ENCODE measurements at regions of chr16 and their contacts with region 1.

Region 1: GRCh38 chr16:71883849-71884638 is at the start of gene ZNF821:
- DNase-seq: peak; percentile 72
- H3K4me3 ChIP-seq: peak within 1 kb of the TSS; percentile 45 to 97 (median 90)
- H3K27ac ChIP-seq: peak within 1 kb of the TSS; percentile 62
- H3K4me1 ChIP-seq: peaks cover 24% of the 10 kb centered on the region
- H3K27me3 ChIP-seq: no peaks in the 10 kb centered on the region
- CTCF ChIP-seq: peak; percentile 28 to 58
- POLR2A ChIP-seq: peak; percentile 56
- total RNA-seq, gene ZNF821: 7.3 and 9.6 TPM in 2 replicates

Region 2: GRCh38 chr16:71681360-71681980 is 202.6 kb before region 1 on chr16:
- CTCF ChIA-PET with region 1: no interaction called
- POLR2A ChIA-PET with region 1: no interaction called
- dilution Hi-C with region 1: no loop called
- intact Hi-C with region 1: no loop called
- DNase-seq: no peak
- H3K4me3 ChIP-seq: no peak overlapping the region
- H3K27ac ChIP-seq: no peak overlapping the region
- H3K4me1 ChIP-seq: no peaks in the 10 kb centered on the region
- H3K27me3 ChIP-seq: no peaks in the 10 kb centered on the region
- CTCF ChIP-seq: no peak
- POLR2A ChIP-seq: no peak

Region 3: GRCh38 chr16:71762186-71762585 is 121.9 kb before region 1 on chr16:
- CTCF ChIA-PET with region 1: interaction called, 5 read pairs
- POLR2A ChIA-PET with region 1: no interaction called
- dilution Hi-C with region 1: no loop called
- intact Hi-C with region 1: loop called (anchors 5 kb)
- DNase-seq: no peak
- H3K4me3 ChIP-seq: no peak overlapping the region
- H3K27ac ChIP-seq: peak overlapping the region; percentile 56
- H3K4me1 ChIP-seq: peaks cover 21% of the 10 kb centered on the region
- H3K27me3 ChIP-seq: no peaks in the 10 kb centered on the region
- CTCF ChIP-seq: no peak
- POLR2A ChIP-seq: no peak

Region 4: GRCh38 chr16:71853413-71853812 is 30.6 kb before region 1 on chr16:
- CTCF ChIA-PET with region 1: interaction called, 14 read pairs
- POLR2A ChIA-PET with region 1: no interaction called
- dilution Hi-C with region 1: no loop called
- intact Hi-C with region 1: no loop called
- DNase-seq: no peak
- H3K4me3 ChIP-seq: no peak overlapping the region
- H3K27ac ChIP-seq: no peak overlapping the region
- H3K4me1 ChIP-seq: no peaks in the 10 kb centered on the region
- H3K27me3 ChIP-seq: no peaks in the 10 kb centered on the region
- CTCF ChIP-seq: no peak
- POLR2A ChIP-seq: no peak

Region 5: DNA sequence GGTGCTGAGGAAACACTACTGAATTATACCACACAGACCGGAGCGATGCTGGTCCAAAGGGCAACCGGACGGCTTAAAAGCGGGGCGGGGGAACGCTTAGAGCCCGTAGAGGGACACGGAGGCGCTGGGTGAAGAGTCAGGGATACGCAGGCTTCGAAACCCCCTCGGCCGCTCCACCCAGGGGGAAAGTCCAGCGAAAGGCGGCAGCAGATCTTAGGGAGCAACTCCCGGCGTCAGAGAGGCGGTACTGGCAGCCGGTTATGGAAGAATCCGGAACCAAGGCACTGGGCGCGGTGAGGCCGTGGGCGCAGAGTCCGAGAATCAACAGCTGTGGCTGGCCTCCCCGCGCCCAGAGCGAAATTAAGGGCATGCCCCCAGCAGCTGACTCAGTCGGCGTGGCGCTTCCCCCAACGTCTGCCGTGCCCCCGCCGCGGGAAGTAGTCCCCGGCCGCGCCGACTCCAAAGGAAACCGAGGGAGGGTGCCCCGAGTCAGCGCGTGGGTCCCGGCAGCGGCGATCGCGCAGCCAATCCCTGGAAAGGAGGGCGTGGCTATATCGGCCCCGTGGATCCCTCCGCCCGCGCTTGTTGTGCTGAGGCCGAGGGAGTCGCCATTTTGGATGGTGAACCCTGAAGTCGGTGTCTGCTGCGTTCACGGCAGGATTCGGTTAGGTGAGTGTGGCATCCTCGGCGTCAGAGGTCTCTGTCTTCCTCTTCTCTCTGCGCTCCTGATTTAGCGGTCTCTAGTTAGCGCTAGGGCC is 11.1 kb after region 1 on chr16 and contains the start of gene IST1:
- CTCF ChIA-PET with region 1: interaction called, 44 read pairs
- POLR2A ChIA-PET with region 1: interaction called, 4 read pairs
- dilution Hi-C with region 1: no loop called
- intact Hi-C with region 1: loop called (anchors 1 kb)
- DNase-seq: peak; percentile 98
- H3K4me3 ChIP-seq: peak within 1 kb of the TSS; percentile 84 to 98 (median 95)
- H3K27ac ChIP-seq: peak within 1 kb of the TSS; percentile 88
- H3K4me1 ChIP-seq: peaks cover 8% of the 10 kb centered on the region
- H3K27me3 ChIP-seq: no peaks in the 10 kb centered on the region
- CTCF ChIP-seq: no peak
- POLR2A ChIP-seq: peak; percentile 95
- total RNA-seq, gene IST1: 165 and 185 TPM in 2 replicates

Region 6: GRCh38 chr16:71927383-71927782 is 43.3 kb after region 1 on chr16:
- CTCF ChIA-PET with region 1: interaction called, 27 read pairs
- POLR2A ChIA-PET with region 1: no interaction called
- dilution Hi-C with region 1: no loop called
- intact Hi-C with region 1: loop called (anchors 1 kb)
- DNase-seq: peak; percentile 90
- H3K4me3 ChIP-seq: no peak overlapping the region
- H3K27ac ChIP-seq: peak overlapping the region; percentile 75
- H3K4me1 ChIP-seq: peaks cover 55% of the 10 kb centered on the region
- H3K27me3 ChIP-seq: no peaks in the 10 kb centered on the region
- CTCF ChIP-seq: no peak
- POLR2A ChIP-seq: peak; percentile 27

Region 7: GRCh38 chr16:72099377-72099818 is 215.4 kb after region 1 on chr16:
- CTCF ChIA-PET with region 1: no interaction called
- POLR2A ChIA-PET with region 1: no interaction called
- dilution Hi-C with region 1: no loop called
- intact Hi-C with region 1: loop called (anchors 1 kb)
- DNase-seq: peak; percentile 63
- H3K4me3 ChIP-seq: no peak overlapping the region
- H3K27ac ChIP-seq: no peak overlapping the region
- H3K4me1 ChIP-seq: peaks cover 10% of the 10 kb centered on the region
- H3K27me3 ChIP-seq: no peaks in the 10 kb centered on the region
- CTCF ChIP-seq: peak; percentile 60 to 65
- POLR2A ChIP-seq: no peak